H1 (cell line): ENCODE measurements at regions of chr6 and their contacts with region 1.

Region 1: DNA sequence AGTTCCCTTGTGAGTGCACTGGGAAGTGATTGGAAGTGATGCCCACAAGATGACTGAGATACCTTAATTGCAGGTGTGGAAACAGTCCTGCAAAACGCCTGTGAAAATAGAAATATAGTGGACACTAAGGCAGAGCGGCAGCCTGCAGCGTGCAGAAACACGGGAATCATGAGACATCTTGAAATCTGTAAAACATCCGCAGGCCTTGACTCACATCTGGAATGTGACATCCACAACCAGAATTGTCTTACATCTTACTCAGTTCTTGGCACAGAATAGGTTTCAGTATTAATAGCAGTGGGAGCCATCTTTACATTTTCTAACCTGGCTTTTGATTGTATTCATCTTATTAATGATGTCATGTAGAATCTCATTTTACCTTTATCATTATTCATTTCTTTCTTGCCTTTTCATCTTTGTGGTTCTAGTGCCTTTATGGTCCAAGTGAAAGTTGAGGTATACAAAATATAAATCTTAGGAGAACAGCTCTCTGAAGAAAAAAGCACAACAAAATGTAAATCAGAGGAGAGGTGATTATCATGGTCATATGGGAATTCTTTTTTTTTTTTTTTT is 44.6 kb downstream of the CDYL start:
- DNase-seq: no peak
- H3K4me3 ChIP-seq: no peak overlapping the region
- H3K27ac ChIP-seq: no peak overlapping the region
- H3K4me1 ChIP-seq: peaks cover 0 to 5% (median 4%) of the 10 kb centered on the region in 4 experiments; a peak in 4 of 7 replicates
- H3K27me3 ChIP-seq: no peaks in the 10 kb centered on the region
- CTCF ChIP-seq: no peak
- EP300 ChIP-seq: no peak
- POLR2A ChIP-seq: no peak
- RAD21 ChIP-seq: no peak

Region 2: GRCh38 chr6:4848382-4849068 is 27.7 kb after region 1 on chr6:
- CTCF ChIA-PET with region 1: interaction called, 10 read pairs
- POLR2A ChIA-PET with region 1: no interaction called
- DNase-seq: no peak
- H3K4me3 ChIP-seq: no peak overlapping the region
- H3K27ac ChIP-seq: no peak overlapping the region
- H3K4me1 ChIP-seq: peaks cover 0 to 11% (median 2%) of the 10 kb centered on the region in 4 experiments; a peak in 2 of 7 replicates
- H3K27me3 ChIP-seq: no peaks in the 10 kb centered on the region
- CTCF ChIP-seq: peak; percentile 46 to 66 (median 61)
- EP300 ChIP-seq: no peak
- POLR2A ChIP-seq: no peak
- RAD21 ChIP-seq: peak; percentile 67 to 70

Region 3: DNA sequence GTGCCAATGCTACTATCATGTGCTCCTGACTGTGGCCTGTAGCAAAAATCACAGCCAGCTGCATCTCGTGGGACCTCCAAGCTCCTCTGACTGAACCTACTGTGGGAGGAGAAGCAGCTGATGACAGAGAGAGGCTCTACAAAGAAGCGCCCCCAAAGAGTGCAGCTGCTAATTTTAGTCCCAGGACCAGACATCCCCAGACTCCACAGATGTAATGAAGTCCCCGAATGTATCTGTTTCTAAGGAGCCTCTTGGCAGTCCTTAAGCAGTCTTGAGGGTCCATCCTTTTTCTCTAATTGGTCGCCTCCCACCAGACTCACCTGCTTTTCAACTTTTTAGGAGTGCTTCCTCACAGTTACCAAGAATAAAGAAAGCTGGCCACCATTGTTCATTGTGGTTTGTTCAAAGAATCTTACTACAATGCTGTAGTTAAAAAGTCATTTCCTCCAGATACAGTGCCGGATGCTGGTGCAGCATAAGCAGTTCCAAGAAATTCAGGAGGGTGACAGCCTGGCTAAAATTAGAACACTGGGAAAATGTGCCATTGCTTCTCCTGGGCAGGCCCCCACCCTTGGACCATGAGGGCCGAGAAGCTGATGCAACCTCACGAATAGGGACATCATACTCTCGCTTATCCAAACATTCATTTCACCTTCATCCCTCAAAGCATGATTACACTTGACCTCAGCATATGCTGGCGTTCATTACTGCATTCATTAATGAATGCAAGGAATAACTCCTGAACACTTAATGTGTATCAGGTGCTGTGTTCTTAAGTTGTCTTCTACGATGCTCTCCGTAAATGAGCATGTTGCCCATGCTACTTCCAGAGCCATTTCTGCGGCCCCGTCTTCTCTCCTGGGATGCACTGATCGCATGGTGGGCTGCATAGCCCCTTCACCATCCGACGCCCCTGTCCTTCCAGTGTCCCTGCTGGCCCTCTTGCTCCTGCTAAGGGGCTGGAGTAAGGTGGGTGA is 1834.1 kb after region 1 on chr6:
- CTCF ChIA-PET with region 1: no interaction called
- POLR2A ChIA-PET with region 1: no interaction called
- DNase-seq: no peak
- H3K4me3 ChIP-seq: no peak overlapping the region
- H3K27ac ChIP-seq: no peak overlapping the region
- H3K4me1 ChIP-seq: peaks cover 0 to 5% (median 0%) of the 10 kb centered on the region in 4 experiments; a peak in 1 of 7 replicates
- H3K27me3 ChIP-seq: peaks cover 0 to 17% (median 3%) of the 10 kb centered on the region in 4 experiments; a peak in 4 of 7 replicates
- CTCF ChIP-seq: no peak
- EP300 ChIP-seq: no peak
- POLR2A ChIP-seq: no peak
- RAD21 ChIP-seq: no peak